KBM-7 (cell line): ENCODE measurements at regions of chr17 and their contacts with region 1.

Region 1: DNA sequence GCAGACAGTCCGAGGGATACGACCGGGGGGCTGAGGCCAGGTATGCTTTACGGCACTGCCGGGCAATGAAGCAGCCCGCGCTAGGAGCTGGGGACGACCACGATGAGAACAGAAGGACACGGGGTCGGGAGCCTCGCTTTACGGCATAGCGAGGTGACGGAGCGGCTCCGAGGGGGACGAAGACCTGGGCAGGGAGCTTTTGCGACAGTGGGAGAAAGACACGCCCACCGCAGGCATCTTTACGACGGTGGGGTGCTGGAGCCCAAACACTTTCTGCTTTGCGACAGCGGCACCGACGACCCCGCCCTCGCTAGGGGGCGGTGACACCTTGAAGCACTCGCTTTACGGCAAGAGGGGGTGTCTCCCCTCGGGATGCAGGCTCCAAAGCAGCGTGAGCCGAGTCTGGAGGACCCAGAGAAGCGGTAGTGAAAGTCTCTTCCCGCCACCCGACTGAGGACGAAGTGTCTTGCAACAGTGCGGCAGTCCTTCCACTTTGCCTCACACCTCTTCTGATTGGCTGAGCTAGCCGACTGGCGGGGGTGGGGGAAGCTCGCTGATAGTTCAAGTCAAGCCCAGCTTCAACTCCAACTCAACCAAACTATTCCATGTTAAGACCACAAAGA is 350 bp upstream of the NEURL4 start:
- DNase-seq: peak; percentile 99

Region 2: DNA sequence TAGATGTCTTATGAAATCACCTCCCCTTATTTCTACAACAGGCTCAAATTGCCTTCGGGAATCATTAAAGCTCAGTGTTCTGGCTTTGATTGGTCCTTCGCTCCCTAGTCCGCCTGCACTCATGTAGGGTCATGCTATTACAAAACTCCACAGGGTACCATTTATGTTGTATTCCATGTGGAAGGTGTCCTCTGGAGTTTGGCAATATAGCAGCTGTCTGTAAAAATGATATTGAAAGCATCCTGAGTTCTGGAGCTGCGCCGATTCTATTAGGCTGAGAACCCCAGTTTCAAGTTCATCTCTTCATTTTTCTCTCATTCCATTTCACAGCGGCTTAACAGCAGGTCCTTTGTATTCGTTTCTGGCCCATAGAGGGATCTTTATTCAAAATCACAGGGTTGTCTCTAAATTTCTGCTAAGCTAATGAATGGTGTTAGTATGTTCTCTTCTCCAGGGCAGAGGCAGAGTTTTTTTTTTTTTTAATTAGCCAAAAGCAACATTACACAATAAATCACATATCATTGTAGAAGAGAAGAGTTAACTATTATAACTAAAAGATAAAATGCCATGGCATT is 426.1 kb before region 1 on chr17:
- in situ Hi-C with region 1: no loop called
- DNase-seq: no peak

Region 3: GRCh38 chr17:7035591-7036368 is 293.7 kb before region 1 on chr17 and contains the start of gene SLC16A13:
- in situ Hi-C with region 1: loop called (anchors 25 kb)
- DNase-seq: peak; percentile 97

Region 4: GRCh38 chr17:7214300-7215135 is 115.0 kb before region 1 on chr17:
- in situ Hi-C with region 1: no loop called
- DNase-seq: peak; percentile 98